Esophagus squamous epithelium (tissue), 5 donors: ENCODE measurements at regions of chr4 and their contacts with region 1.

Region 1: DNA sequence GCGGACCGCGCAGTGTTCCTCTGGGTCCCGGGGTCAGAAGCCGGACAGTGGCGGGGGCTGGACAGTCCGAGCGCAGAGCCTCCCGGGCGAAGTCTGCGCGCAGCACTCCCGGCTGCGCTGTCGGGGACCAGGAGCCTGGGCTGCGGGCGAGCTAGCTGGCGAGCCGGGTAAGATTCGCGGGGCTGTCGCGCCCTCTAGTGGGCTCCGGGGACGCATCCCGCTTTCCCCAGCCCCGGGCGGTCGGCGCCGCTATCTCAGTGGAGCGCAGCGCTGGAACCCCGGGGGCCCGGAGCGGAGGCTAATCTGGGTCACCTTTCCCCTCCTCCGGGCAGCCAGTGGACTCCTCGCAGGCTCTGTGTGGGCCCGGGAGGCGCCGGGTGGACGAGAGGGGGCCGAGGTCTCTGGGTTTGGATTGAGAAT is 4.2 kb downstream of the PDGFRA start:
- DNase-seq: peak; percentile 5
- H3K4me3 ChIP-seq: peak overlapping the region; percentile 36 to 79 (median 60)
- H3K27ac ChIP-seq: peak overlapping the region; percentile 46 to 91 (median 88)
- H3K4me1 ChIP-seq: peaks cover 23 to 73% (median 39%) of the 10 kb centered on the region in 3 donors
- H3K27me3 ChIP-seq: peaks cover 0 to 85% (median 28%) of the 10 kb centered on the region in 4 donors
- CTCF ChIP-seq: peak; percentile 54 to 93 (median 78)
- POLR2A ChIP-seq: no peak

Region 2: DNA sequence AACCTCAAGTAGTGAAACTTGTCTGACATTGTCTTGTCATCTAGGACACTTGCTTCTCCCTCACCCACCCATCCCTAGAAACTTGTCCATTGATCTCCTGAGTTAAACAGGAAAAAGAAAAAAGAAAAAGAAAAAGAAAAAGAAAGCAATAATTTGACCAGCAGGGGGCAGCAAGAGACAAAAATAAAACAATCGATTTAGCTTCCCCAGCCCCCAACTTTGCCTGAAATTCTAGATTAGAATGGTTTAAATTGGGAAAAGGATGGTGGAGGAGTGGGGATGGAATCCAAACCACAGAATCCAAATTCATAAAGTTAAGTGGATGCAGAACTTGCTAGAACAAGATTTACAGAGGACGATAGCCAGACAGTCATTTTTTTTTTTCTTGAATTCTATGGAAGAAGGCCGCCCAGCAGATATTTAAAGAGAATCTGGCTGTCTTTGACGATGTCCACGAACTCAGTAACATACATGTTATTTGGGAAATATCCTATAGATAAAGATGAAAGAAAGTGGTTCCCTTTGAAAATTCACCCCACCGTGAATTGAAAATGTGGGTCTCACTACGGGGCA is 1857.1 kb before region 1 on chr4:
- intact Hi-C with region 1: loop called (anchors 10 kb)
- DNase-seq: no peak
- H3K4me3 ChIP-seq: no peak overlapping the region
- H3K27ac ChIP-seq: no peak overlapping the region
- H3K4me1 ChIP-seq: no peaks in the 10 kb centered on the region
- H3K27me3 ChIP-seq: no peaks in the 10 kb centered on the region
- CTCF ChIP-seq: peak; percentile 39 to 64 (median 54)
- POLR2A ChIP-seq: no peak

Region 3: GRCh38 chr4:53196882-53197771 is 1036.2 kb before region 1 on chr4:
- intact Hi-C with region 1: loop called (anchors 10 kb)
- DNase-seq: no peak
- H3K4me3 ChIP-seq: no peak overlapping the region
- H3K27ac ChIP-seq: no peak overlapping the region
- H3K4me1 ChIP-seq: no peaks in the 10 kb centered on the region
- H3K27me3 ChIP-seq: no peaks in the 10 kb centered on the region
- CTCF ChIP-seq: peak; percentile 62 to 77 (median 70)
- POLR2A ChIP-seq: no peak

Region 4: GRCh38 chr4:54139332-54139731 is 94.0 kb before region 1 on chr4:
- intact Hi-C with region 1: no loop called
- DNase-seq: no peak
- H3K4me3 ChIP-seq: no peak overlapping the region
- H3K27ac ChIP-seq: no peak overlapping the region
- H3K4me1 ChIP-seq: no peaks in the 10 kb centered on the region
- H3K27me3 ChIP-seq: no peaks in the 10 kb centered on the region
- CTCF ChIP-seq: no peak
- POLR2A ChIP-seq: no peak